AG04449 (cell line): ENCODE measurements at regions of chr3 and their contacts with region 1.

Region 1: GRCh38 chr3:138915503-138916498 is 31.1 kb downstream of the FOXL2 start:
- DNase-seq: no peak
- H3K4me3 ChIP-seq: peak overlapping the region; percentile 89
- CTCF ChIP-seq: peak; percentile 89

Region 2: GRCh38 chr3:138442433-138442832 is 473.4 kb before region 1 on chr3:
- CTCF ChIA-PET with region 1: interaction called, 10 read pairs
- POLR2A ChIA-PET with region 1: no interaction called
- DNase-seq: no peak
- H3K4me3 ChIP-seq: no peak overlapping the region
- CTCF ChIP-seq: no peak

Region 3: GRCh38 chr3:138615462-138615861 is 300.3 kb before region 1 on chr3:
- CTCF ChIA-PET with region 1: interaction called, 10 read pairs
- POLR2A ChIA-PET with region 1: interaction called, 3 read pairs
- DNase-seq: no peak
- H3K4me3 ChIP-seq: no peak overlapping the region
- CTCF ChIP-seq: no peak

Region 4: GRCh38 chr3:138686771-138687221 is 229.0 kb before region 1 on chr3:
- CTCF ChIA-PET with region 1: interaction called, 60 read pairs
- POLR2A ChIA-PET with region 1: no interaction called
- DNase-seq: peak; percentile 85
- H3K4me3 ChIP-seq: no peak overlapping the region
- CTCF ChIP-seq: no peak

Region 5: GRCh38 chr3:138768125-138768524 is 147.7 kb before region 1 on chr3:
- CTCF ChIA-PET with region 1: interaction called, 26 read pairs
- POLR2A ChIA-PET with region 1: interaction called, 3 read pairs
- DNase-seq: no peak
- H3K4me3 ChIP-seq: no peak overlapping the region
- CTCF ChIP-seq: no peak

Region 6: DNA sequence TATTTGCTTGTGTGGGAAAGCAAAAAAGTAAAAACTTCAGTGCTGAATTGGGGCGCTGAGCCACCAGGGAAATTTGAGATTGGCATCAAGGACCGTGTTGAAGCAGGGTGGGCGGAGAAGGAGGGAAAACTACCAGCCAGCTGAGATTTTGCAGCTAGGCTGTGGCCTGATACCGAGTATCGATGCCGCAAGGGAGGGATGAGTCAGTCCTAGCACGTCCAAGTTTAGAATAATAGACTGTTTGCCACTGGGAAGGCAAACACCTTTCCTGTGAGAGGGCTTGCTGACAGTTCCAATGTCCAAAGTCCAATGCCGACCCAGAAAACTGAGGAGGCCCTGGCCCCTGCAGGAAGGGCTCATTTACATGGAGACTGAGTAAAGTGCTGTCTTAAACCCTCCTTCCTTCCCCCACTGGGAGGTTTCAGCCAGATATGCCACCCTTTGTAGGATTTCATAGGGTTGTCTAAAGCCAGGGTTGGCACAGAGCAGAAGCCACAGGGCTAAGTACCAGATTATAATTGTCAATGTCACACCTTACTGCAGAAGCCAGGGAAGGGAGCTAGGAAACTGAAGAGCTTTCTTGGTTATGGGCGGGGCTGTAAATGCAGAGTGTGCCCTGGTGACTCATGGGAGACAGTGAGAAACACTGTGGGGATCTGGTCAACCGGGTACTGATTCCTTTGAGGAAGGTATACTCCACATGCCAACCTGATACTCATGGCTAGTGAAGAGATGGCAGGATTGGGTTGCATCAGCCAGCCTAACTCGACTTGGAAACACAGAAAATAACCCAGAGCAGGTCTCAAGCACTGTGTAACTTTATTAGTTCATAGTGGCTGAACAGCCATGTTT is 52.7 kb before region 1 on chr3:
- CTCF ChIA-PET with region 1: interaction called, 28 read pairs
- POLR2A ChIA-PET with region 1: interaction called, 3 read pairs
- DNase-seq: no peak
- H3K4me3 ChIP-seq: no peak overlapping the region
- CTCF ChIP-seq: no peak

Region 7: DNA sequence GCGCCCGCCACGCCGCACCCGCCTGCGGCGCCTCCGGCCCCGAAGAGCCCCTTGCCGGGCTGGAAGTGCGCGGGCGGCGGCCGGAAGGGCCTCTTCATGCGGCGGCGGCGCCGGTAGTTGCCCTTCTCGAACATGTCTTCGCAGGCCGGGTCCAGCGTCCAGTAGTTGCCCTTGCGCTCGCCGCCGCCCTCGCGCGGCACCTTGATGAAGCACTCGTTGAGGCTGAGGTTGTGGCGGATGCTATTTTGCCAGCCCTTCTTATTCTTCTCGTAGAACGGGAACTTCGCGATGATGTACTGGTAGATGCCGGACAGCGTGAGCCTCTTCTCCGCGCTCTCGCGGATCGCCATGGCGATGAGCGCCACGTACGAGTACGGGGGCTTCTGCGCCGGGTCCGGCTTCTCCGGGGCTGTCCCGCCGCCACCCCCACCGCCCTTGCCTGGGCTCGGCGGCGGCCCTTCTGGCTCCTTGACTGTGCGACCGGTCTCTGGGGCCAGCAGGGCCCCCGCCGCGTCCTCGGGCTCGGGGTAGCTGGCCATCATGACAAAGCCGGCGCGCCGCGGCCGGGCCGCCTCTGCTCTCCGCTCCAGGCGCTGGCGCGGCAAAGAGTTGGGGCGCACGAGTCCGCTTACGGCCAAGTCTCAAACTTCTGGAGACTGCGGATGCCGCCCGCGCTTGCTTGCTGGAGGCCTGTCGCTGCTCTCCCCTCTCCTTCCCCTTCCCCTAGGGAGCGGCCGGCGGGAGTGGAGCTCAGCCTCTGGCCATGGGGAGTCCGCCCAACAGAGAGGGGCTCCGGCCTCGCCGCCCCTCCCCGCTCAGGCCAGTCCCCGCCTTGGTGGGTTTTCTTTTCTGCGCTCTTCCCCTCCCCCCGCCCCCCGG is 30.6 kb after region 1 on chr3:
- CTCF ChIA-PET with region 1: interaction called, 10 read pairs
- POLR2A ChIA-PET with region 1: no interaction called
- DNase-seq: no peak
- H3K4me3 ChIP-seq: peak overlapping the region; percentile 64
- CTCF ChIP-seq: peak; percentile 51

Region 8: GRCh38 chr3:138985932-138986331 is 70.1 kb after region 1 on chr3:
- CTCF ChIA-PET with region 1: no interaction called
- POLR2A ChIA-PET with region 1: no interaction called
- DNase-seq: no peak
- H3K4me3 ChIP-seq: no peak overlapping the region
- CTCF ChIP-seq: no peak

Region 9: DNA sequence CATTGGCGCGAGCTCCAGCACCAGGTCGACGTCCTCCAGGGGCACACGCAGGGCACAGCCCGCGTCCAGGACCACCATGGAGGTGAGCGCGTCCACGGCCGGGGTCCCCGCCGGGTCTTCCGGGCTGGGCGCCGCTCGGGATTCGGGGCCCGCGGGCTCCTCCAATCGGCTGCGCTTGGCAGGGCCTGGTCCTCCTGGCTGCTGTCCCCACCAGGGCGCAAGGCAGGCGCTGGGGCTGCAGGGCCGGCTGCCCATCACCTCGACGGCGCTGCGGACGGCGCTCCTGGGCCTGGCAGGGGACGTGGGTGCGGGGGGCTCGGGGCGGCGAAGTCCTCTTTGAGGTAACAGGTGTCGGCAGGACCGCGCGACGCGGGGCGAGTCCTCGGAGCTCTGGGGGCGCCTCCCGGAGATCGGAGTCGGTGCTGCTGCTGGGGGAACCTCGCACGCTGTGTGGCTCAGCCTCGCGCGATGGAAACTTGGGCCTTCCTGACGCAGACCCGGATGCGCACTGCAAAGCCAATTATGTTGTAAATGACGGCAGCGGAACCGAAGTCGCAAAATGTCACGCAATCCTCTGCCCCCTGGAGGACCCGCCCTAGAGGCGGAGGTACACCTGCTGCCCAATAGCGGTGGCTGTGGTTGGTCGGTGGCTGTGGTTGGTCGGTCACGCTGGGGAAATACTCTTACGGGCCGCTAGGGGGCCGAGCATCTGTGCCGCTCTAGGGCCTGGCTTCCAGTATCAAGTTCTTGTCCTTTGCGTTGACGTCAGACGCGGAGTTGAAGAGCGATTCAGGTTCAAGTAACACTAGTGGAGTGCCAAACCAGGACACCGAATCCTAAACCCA is 128.8 kb after region 1 on chr3 and contains the start of gene PRR23C:
- CTCF ChIA-PET with region 1: no interaction called
- POLR2A ChIA-PET with region 1: no interaction called
- DNase-seq: no peak
- H3K4me3 ChIP-seq: no peak within 1 kb of the TSS
- CTCF ChIP-seq: no peak